CD4-positive, alpha-beta T cell (primary cell): ENCODE measurements at regions of chr17 and their contacts with region 1.

Region 1: DNA sequence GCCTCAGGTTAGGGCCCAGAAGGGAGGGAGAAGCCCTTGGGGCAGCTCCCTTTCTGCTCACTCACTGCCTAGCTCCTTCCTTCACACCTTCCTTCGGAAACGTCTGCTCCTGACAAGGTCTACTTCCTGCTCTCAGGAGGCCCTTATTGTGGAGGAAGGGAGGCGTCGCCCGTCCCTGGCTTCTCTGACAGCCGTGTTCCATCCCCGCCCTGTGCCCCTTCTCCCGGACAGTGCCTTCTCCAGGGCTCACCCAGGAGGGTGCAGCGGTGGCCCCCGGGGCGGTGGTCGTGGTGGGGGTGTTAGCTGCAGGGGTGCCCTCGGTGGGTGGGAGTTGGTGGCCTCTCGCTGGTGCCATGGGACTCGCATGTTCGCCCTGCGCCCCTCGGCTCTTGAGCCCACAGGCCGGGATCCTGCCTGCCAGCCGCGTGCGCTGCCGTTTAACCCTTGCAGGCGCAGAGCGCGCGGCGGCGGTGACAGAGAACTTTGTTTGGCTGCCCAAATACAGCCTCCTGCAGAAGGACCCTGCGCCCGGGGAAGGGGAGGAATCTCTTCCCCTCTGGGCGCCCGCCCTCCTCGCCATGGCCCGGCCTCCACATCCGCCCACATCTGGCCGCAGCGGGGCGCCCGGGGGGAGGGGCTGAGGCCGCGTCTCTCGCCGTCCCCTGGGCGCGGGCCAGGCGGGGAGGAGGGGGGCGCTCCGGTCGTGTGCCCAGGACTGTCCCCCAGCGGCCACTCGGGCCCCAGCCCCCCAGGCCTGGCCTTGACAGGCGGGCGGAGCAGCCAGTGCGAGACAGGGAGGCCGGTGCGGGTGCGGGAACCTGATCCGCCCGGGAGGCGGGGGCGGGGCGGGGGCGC is 231.9 kb downstream of the SEC14L1 start:
- DNase-seq: peak in 13 of 14 experiments; percentile 30 to 78 (median 58)
- ATAC-seq: peak; percentile 25
- H3K4me3 ChIP-seq: peak overlapping the region; percentile 100
- H3K4me3 Mint-ChIP-seq: peak overlapping the region; percentile 93
- H3K27ac ChIP-seq: peak overlapping the region; percentile 45 to 60
- H3K27ac Mint-ChIP-seq: peak overlapping the region; percentile 91
- H3K4me1 ChIP-seq: peaks cover 73% of the 10 kb centered on the region
- H3K4me1 Mint-ChIP-seq: peaks cover 75% of the 10 kb centered on the region
- H3K27me3 ChIP-seq: no peaks in the 10 kb centered on the region
- H3K27me3 Mint-ChIP-seq: no peaks in the 10 kb centered on the region
- CTCF ChIP-seq: no peak

Region 2: DNA sequence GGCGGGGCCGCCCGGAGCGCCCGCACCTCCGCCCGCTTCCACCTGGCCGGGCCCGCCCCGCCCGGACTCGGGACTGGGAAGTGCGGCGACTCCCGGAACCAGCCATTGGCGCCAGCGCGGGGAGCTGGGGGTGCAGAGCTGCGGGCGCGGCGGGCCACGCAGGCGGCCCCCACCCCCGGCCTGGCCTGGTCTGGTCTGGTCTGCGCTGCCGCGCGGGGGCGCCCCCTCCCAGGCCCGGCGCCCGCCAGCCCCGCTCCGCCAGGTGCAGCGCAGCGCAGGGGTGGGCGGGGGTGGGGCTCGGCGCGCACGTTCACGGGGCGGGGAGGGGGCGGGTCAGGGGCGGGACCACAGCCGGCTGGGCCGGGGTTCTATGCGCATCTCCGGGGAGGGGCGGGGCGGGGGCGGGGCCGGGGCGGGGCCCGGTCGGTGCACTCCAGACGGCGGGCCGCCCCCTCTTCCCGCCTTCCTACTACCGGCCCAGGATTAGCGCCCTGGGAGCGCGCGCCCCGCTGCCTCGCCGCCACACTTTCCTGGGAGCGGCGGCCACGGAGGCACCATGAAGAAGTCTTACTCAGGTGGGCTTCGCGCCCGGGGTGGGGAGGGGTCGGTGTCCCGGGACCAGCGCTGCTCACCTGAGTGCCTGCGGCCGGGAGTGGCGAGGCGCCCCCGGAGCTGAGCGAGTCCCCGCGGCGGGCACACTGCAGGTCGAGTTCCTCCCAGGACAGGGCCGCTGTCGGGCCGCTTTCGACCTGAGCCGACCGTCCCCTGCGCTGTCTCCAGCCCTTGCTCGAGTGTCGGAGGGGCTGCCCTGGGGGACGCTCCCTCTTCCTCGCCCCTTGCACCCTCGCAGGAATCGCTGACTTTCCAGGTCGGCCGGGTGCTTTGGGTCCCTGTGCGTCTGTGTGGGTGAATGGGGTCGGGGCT is 91.4 kb before region 1 on chr17:
- CTCF ChIA-PET with region 1: no interaction called
- POLR2A ChIA-PET with region 1: no interaction called
- intact Hi-C with region 1: loop called in 1 of 2 experiments (anchors 5 kb)
- DNase-seq: peak; percentile 32 to 89 (median 60)
- ATAC-seq: peak; percentile 92
- H3K4me3 ChIP-seq: peak overlapping the region; percentile 44
- H3K4me3 Mint-ChIP-seq: peak overlapping the region; percentile 88
- H3K27ac ChIP-seq: no peak overlapping the region
- H3K27ac Mint-ChIP-seq: peak overlapping the region; percentile 88
- H3K4me1 ChIP-seq: peaks cover 26% of the 10 kb centered on the region
- H3K4me1 Mint-ChIP-seq: peaks cover 14% of the 10 kb centered on the region
- H3K27me3 ChIP-seq: peaks cover 12 to 21% of the 10 kb centered on the region in 2 experiments
- H3K27me3 Mint-ChIP-seq: peaks cover 15% of the 10 kb centered on the region
- CTCF ChIP-seq: no peak

Region 3: DNA sequence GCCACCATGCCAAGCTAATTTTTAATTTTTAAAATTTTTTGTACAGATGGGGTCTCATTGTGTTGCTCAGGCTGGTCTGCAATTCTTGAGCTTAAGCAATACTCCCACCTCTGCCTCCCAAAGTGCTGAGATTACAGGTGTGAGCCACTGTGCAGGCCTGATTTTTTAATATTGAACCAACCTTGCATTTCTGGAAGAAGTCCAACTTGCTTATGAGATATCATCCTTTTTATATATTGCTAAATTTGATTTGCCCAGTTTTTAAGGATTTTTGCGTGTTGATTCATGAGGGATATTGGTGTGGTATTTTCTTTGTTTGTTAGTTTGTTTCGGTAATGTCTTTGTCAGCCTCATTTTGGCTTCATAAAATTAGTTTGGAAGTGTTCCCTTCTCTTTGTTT is 35.5 kb before region 1 on chr17:
- CTCF ChIA-PET with region 1: interaction called, 40 read pairs
- POLR2A ChIA-PET with region 1: interaction called, 91 read pairs
- intact Hi-C with region 1: no loop called
- DNase-seq: no peak
- ATAC-seq: no peak
- H3K4me3 ChIP-seq: no peak overlapping the region
- H3K4me3 Mint-ChIP-seq: no peak overlapping the region
- H3K27ac ChIP-seq: no peak overlapping the region
- H3K27ac Mint-ChIP-seq: no peak overlapping the region
- H3K4me1 ChIP-seq: peaks cover 57% of the 10 kb centered on the region
- H3K4me1 Mint-ChIP-seq: peaks cover 50% of the 10 kb centered on the region
- H3K27me3 ChIP-seq: no peaks in the 10 kb centered on the region
- H3K27me3 Mint-ChIP-seq: no peaks in the 10 kb centered on the region
- CTCF ChIP-seq: no peak

Region 4: GRCh38 chr17:77391668-77392375 is 19.2 kb after region 1 on chr17:
- CTCF ChIA-PET with region 1: interaction called, 26 read pairs
- POLR2A ChIA-PET with region 1: interaction called, 85 read pairs
- intact Hi-C with region 1: no loop called
- DNase-seq: peak in 10 of 14 experiments; percentile 33 to 76 (median 53)
- ATAC-seq: peak; percentile 41
- H3K4me3 ChIP-seq: peak overlapping the region; percentile 19
- H3K4me3 Mint-ChIP-seq: peak overlapping the region; percentile 65
- H3K27ac ChIP-seq: peak overlapping the region; percentile 31
- H3K27ac Mint-ChIP-seq: peak overlapping the region; percentile 90
- H3K4me1 ChIP-seq: peaks cover 91% of the 10 kb centered on the region
- H3K4me1 Mint-ChIP-seq: peaks cover 88% of the 10 kb centered on the region
- H3K27me3 ChIP-seq: no peaks in the 10 kb centered on the region
- H3K27me3 Mint-ChIP-seq: no peaks in the 10 kb centered on the region
- CTCF ChIP-seq: no peak

Region 5: GRCh38 chr17:77429919-77430752 is 57.5 kb after region 1 on chr17:
- CTCF ChIA-PET with region 1: interaction called, 5 read pairs
- POLR2A ChIA-PET with region 1: interaction called, 58 read pairs
- intact Hi-C with region 1: no loop called
- DNase-seq: peak; percentile 75 to 90 (median 84)
- ATAC-seq: peak; percentile 46
- H3K4me3 ChIP-seq: no peak overlapping the region
- H3K4me3 Mint-ChIP-seq: peak overlapping the region; percentile 62
- H3K27ac ChIP-seq: peak overlapping the region in 1 of 2 donors; percentile 29
- H3K27ac Mint-ChIP-seq: peak overlapping the region; percentile 93
- H3K4me1 ChIP-seq: peaks cover 100% of the 10 kb centered on the region
- H3K4me1 Mint-ChIP-seq: peaks cover 93% of the 10 kb centered on the region
- H3K27me3 ChIP-seq: no peaks in the 10 kb centered on the region
- H3K27me3 Mint-ChIP-seq: no peaks in the 10 kb centered on the region
- CTCF ChIP-seq: peak; percentile 77

Region 6: GRCh38 chr17:77451245-77451893 is 78.7 kb after region 1 on chr17:
- CTCF ChIA-PET with region 1: no interaction called
- POLR2A ChIA-PET with region 1: interaction called, 48 read pairs
- intact Hi-C with region 1: no loop called
- DNase-seq: peak; percentile 53 to 85 (median 72)
- ATAC-seq: peak; percentile 47
- H3K4me3 ChIP-seq: peak overlapping the region; percentile 94
- H3K4me3 Mint-ChIP-seq: peak overlapping the region; percentile 98
- H3K27ac ChIP-seq: peak overlapping the region; percentile 67 to 90
- H3K27ac Mint-ChIP-seq: peak overlapping the region; percentile 93
- H3K4me1 ChIP-seq: peaks cover 84% of the 10 kb centered on the region
- H3K4me1 Mint-ChIP-seq: peaks cover 65% of the 10 kb centered on the region
- H3K27me3 ChIP-seq: no peaks in the 10 kb centered on the region
- H3K27me3 Mint-ChIP-seq: no peaks in the 10 kb centered on the region
- CTCF ChIP-seq: no peak

Region 7: GRCh38 chr17:77476931-77477877 is 104.5 kb after region 1 on chr17:
- CTCF ChIA-PET with region 1: no interaction called
- POLR2A ChIA-PET with region 1: interaction called, 13 read pairs
- intact Hi-C with region 1: no loop called
- DNase-seq: peak in 2 of 14 experiments; percentile 47 to 48
- ATAC-seq: peak; percentile 33
- H3K4me3 ChIP-seq: no peak overlapping the region
- H3K4me3 Mint-ChIP-seq: peak overlapping the region; percentile 74
- H3K27ac ChIP-seq: peak overlapping the region; percentile 58 to 75
- H3K27ac Mint-ChIP-seq: peak overlapping the region; percentile 97
- H3K4me1 ChIP-seq: peaks cover 98% of the 10 kb centered on the region
- H3K4me1 Mint-ChIP-seq: peaks cover 79% of the 10 kb centered on the region
- H3K27me3 ChIP-seq: no peaks in the 10 kb centered on the region
- H3K27me3 Mint-ChIP-seq: no peaks in the 10 kb centered on the region
- CTCF ChIP-seq: no peak

Region 8: DNA sequence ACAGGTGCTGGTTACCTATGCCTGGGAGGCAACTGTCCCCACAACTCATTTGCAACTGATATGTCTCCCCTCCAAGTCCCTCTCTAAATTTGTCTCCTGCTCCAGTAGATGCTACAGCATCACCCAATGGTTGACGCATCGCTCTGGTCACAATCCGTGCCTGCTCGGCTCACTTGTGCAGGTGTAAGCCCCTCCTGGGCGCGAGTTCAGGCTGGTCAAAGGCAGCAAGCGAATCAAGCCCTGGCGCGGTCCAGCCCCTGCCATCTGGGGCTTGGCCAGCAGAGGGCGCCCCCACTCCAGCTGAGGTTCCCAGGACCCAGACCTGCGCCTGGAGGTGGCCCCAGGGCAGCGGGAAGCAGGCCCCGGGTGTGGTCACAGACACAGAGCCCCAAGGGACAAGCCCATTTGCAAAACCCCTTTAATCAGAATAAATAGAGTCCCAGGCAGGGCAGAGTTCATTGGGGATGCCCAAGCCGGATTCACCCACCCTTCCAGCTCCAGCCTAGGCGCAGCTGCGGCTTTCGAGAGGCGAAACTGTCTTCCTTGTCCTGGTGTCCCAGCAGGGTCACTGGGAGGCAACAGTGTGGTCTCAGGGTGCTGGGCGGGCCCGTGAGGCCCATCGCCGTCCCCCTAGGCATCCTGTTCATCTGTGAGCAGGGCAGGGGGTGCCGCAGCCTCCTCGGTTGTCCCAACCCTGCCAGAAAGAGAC is 740.0 kb after region 1 on chr17:
- CTCF ChIA-PET with region 1: no interaction called
- POLR2A ChIA-PET with region 1: no interaction called
- intact Hi-C with region 1: no loop called
- DNase-seq: peak; percentile 55 to 87 (median 77)
- ATAC-seq: peak; percentile 73
- H3K4me3 ChIP-seq: no peak overlapping the region
- H3K4me3 Mint-ChIP-seq: no peak overlapping the region
- H3K27ac ChIP-seq: peak overlapping the region; percentile 7 to 46
- H3K27ac Mint-ChIP-seq: peak overlapping the region; percentile 84
- H3K4me1 ChIP-seq: peaks cover 72% of the 10 kb centered on the region
- H3K4me1 Mint-ChIP-seq: peaks cover 36% of the 10 kb centered on the region
- H3K27me3 ChIP-seq: no peaks in the 10 kb centered on the region
- H3K27me3 Mint-ChIP-seq: no peaks in the 10 kb centered on the region
- CTCF ChIP-seq: peak; percentile 100